ENCODE measurements at regions of chr13 and their contacts with region 1.

Region 1: GRCh38 chr13:37029617-37030016 is 29.0 kb downstream of the EXOSC8 start:
- DNase-seq: no peak
- H3K4me3 ChIP-seq: no peak overlapping the region
- H3K27ac ChIP-seq: no peak overlapping the region
- H3K4me1 ChIP-seq: no peaks in the 10 kb centered on the region
- H3K27me3 ChIP-seq: no peaks in the 10 kb centered on the region
- CTCF ChIP-seq: no peak
- POLR2A ChIP-seq: no peak

Region 2: GRCh38 chr13:36801035-36801434 is 228.6 kb before region 1 on chr13:
- intact Hi-C with region 1: no loop called
- DNase-seq: no peak
- H3K4me3 ChIP-seq: no peak overlapping the region
- H3K27ac ChIP-seq: no peak overlapping the region
- H3K4me1 ChIP-seq: no peaks in the 10 kb centered on the region
- H3K27me3 ChIP-seq: no peaks in the 10 kb centered on the region
- CTCF ChIP-seq: no peak
- POLR2A ChIP-seq: no peak

Region 3: GRCh38 chr13:37046062-37046461 is 16.4 kb after region 1 on chr13:
- intact Hi-C with region 1: loop called (anchors 1 kb)
- DNase-seq: no peak
- H3K4me3 ChIP-seq: no peak overlapping the region
- H3K27ac ChIP-seq: no peak overlapping the region
- H3K4me1 ChIP-seq: no peaks in the 10 kb centered on the region
- H3K27me3 ChIP-seq: no peaks in the 10 kb centered on the region
- CTCF ChIP-seq: no peak
- POLR2A ChIP-seq: no peak

Measured in vagina (tissue), 2 donors.